HAP-1 (cell line): ENCODE measurements at regions of chr19 and their contacts with region 1.

Region 1: DNA sequence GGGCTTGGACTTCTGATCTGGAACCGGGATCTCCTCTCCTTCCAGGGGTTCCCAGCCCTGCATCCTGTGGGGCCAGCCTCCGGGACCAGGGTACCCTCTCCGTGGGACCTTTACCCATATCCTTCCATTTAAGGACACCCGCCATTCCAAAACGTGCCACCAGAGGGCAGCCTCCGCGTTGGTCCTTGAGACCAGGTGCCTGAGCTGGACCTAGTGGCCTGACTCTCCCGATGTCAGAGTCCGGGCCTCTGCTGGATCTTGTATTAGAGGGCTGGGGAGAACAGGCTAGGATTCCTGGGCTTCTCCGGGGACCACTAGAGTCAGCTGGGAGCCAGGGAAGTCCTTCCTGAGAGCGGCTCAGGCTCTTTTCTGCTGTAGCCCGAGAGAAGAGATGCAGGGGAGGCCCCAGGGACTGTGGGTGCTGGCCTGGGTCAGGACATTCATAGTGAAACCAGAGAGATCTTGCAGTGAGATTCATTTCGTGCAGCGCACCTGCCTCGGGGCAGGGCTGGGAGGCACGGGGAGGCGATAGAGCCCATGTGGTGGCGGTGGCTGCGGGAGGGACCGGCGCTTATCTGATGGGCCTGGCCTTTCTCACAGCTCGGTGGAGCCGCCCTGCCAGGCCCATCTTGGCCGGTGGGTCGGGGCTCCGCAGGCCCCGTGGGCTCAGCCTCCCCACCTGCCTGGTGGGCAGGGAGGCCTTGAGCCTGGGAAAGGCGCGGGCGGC is 9.8 kb upstream of the SLC7A10 start:
- DNase-seq: peak; percentile 56 to 94
- H3K4me3 ChIP-seq: no peak overlapping the region
- H3K4me1 ChIP-seq: no peaks in the 10 kb centered on the region
- H3K27me3 ChIP-seq: no peaks in the 10 kb centered on the region

Region 2: DNA sequence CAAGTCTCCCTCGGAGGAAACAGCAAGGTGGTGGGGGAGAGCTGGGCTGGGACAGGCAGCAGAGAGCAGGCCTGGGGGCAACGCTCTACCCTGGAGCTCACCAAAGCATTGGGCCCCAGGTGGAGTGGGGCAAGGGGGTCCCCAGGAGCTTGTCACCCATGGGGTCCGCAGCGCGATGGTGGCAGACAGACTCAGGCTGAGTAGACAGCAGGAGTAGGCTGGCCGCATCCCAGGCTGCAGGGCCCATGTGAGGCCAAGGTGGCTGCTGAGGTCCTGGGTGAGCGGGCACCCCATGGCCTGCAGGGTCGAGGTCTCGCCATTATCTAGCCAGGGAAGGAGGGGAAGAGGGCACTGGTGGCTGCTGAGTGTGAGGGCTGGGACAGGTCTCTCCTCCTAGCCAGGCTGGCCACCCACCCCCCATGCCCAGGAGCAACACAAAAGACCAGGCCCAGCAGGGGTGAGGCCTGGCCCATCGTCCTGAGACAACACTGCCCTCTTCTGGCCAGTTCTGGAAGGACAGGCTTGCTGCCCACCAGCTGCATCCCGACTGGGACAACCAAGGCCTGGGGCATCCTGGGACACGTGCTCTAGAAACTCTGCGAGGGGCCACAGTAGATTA is 171.2 kb after region 1 on chr19:
- in situ Hi-C with region 1: loop called (anchors 5 kb)
- DNase-seq: peak; percentile 55 to 90
- H3K4me3 ChIP-seq: no peak overlapping the region
- H3K4me1 ChIP-seq: no peaks in the 10 kb centered on the region
- H3K27me3 ChIP-seq: no peaks in the 10 kb centered on the region

Region 3: DNA sequence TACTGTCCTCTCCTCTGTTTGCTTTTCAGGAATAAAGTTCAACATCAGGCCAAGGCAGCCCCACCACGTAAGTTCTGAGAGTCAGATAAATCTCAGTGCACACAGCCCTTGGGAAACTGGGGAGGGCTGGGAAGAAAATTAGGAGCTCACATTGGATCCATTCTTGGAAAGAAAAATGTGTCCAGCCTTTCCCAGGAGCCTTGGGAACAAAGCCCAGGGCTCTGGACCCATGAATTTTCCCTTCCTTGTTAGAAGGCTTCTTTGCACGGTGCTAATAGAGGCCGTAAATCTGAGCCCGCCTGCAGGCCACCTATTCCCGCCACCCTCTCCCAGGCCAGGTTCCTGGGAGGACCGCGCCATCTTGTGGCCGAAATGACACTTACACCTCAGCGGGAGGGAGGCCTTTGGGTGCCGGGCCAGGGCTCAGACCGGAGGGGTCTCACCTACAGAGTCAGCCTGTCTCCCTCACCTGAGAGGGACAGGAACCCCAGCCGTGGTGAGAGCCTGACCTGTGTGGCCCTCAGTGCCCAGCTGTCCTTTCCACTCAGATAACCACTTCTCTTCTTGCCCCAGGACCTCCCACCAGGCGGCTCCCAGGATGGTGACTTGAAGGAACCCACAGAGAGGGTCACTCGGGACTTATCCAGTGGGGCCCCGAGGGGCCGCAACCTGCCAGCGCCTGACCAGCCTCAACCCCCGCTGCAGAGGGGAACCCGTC is 536.1 kb after region 1 on chr19:
- in situ Hi-C with region 1: loop called (anchors 5 kb)
- DNase-seq: peak; percentile 54 to 89
- H3K4me3 ChIP-seq: no peak overlapping the region
- H3K4me1 ChIP-seq: no peaks in the 10 kb centered on the region
- H3K27me3 ChIP-seq: no peaks in the 10 kb centered on the region